Naive thymus-derived CD8-positive, alpha-beta T cell (primary cell): ENCODE measurements at regions of chr17 and their contacts with region 1.

Region 1: GRCh38 chr17:64262417-64263260 is at the start of gene TEX2:
- DNase-seq: peak; percentile 34 to 83 (median 72)
- ATAC-seq: peak; percentile 43 to 57
- H3K4me3 Mint-ChIP-seq: peak within 1 kb of the TSS; percentile 84 to 99 (median 96)
- H3K27ac Mint-ChIP-seq: peak within 1 kb of the TSS; percentile 86 to 98 (median 96)
- H3K4me1 Mint-ChIP-seq: peaks cover 26 to 46% (median 41%) of the 10 kb centered on the region in 4 donors
- H3K27me3 Mint-ChIP-seq: peaks cover 0 to 5% (median 0%) of the 10 kb centered on the region in 5 donors
- polyA plus RNA-seq, gene TEX2: 5.2 to 7.3 (median 6.3) TPM

Region 2: DNA sequence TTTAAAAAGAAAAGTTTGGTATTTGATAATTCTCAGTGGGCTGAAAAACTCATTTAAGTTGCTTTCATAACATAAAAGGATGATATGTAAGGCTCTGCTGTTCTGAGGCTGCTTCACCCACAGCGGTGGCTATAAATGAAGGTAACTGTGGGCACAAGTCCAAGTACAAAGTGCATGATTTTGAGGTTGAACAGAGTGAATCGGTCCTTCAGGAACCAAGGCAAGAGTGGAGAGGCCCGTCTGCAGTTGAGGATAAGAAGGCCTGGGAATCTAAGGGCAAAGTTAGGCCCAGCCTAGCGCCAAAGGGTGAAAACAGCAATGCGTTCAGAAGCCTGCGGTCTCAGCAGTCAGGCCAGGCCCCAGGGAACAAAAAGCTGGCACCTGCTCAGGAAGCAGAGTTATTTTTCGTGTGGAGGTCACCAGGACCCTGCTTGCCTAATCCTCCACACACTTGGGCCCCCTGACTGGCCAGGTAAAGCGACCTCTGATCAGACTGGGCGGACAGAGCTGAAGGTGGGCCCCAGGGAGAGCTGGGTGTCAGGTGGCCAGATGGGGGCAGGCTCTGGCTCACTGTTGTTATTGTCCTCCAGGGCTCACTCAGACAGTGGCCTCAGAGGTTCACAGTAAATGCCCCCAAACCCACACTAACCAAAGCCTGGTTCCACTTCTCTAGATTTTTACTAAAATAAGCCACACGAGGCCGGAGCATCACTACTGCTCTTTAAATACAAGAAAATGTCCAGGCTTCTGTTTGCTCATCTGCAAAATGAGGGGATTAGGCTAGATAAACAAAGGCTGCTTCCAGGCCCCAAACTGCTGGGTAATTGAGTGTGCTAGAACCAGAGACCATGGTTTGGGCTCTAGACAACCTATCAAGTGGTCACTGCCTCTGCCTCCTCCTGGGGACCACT is 46.0 kb before region 1 on chr17:
- POLR2A ChIA-PET with region 1: interaction called, 14 read pairs
- DNase-seq: peak in 1 of 10 donors; percentile 8
- ATAC-seq: peak; percentile 44 to 54
- H3K4me3 Mint-ChIP-seq: peak overlapping the region in 7 of 10 donors; percentile 18 to 64 (median 38)
- H3K27ac Mint-ChIP-seq: peak overlapping the region; percentile 65 to 94 (median 80)
- H3K4me1 Mint-ChIP-seq: peaks cover 33 to 59% (median 50%) of the 10 kb centered on the region in 4 donors
- H3K27me3 Mint-ChIP-seq: no peaks in the 10 kb centered on the region